ENCODE measurements at regions of chr1 and their contacts with region 1.

Region 1: DNA sequence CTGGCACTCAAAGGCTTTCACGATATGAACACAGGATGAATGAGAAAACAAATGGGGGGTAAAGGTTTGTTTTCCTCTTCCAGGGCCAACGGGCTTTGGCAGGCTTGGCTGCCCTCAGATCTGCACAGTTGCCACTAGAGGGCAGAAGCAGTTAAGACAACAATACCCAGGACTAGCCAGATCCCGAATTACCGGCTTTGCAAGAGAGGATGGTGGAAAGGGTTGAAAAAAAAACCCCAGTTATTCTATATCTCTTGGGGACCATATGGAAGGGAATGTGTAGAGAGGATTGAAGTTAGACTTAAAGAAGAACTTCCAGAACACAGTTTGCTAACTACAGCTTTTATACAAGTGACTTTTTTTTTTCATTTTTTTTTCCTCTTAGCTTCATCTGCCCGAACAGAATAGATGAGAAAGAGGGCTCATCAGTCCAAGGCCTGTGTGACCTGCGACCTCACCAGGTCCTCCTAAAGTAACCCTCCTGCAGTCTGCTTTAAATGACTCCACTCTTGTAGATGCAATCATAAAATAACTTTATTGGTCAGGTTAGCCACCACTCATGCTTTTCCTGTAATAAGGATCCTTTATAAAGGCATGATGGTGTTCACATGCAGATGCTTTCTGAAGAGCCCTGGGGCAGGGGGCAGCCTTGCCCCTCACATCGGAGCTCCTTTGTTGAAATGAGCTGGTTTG is 10.7 kb downstream of the FMOD start:
- DNase-seq: peak; percentile 71
- H3K4me3 Mint-ChIP-seq: no peak overlapping the region
- H3K27ac Mint-ChIP-seq: no peak overlapping the region
- H3K4me1 Mint-ChIP-seq: peaks cover 23% of the 10 kb centered on the region
- H3K27me3 Mint-ChIP-seq: peaks cover 11% of the 10 kb centered on the region

Region 2: GRCh38 chr1:203273206-203273868 is 66.9 kb before region 1 on chr1:
- CTCF ChIA-PET with region 1: interaction called, 847 read pairs
- POLR2A ChIA-PET with region 1: interaction called, 17 read pairs
- intact Hi-C with region 1: loop called (anchors 1 kb)
- DNase-seq: peak; percentile 95
- H3K4me3 Mint-ChIP-seq: peak overlapping the region; percentile 63
- H3K27ac Mint-ChIP-seq: peak overlapping the region; percentile 72
- H3K4me1 Mint-ChIP-seq: peaks cover 64% of the 10 kb centered on the region
- H3K27me3 Mint-ChIP-seq: no peaks in the 10 kb centered on the region

Region 3: GRCh38 chr1:203304919-203305808 is 35.1 kb before region 1 on chr1 and contains the start of gene BTG2:
- CTCF ChIA-PET with region 1: interaction called, 138 read pairs
- POLR2A ChIA-PET with region 1: interaction called, 5 read pairs
- intact Hi-C with region 1: loop called (anchors 2 kb)
- DNase-seq: peak; percentile 95
- H3K4me3 Mint-ChIP-seq: peak within 1 kb of the TSS; percentile 92
- H3K27ac Mint-ChIP-seq: peak within 1 kb of the TSS; percentile 98
- H3K4me1 Mint-ChIP-seq: peaks cover 51% of the 10 kb centered on the region
- H3K27me3 Mint-ChIP-seq: no peaks in the 10 kb centered on the region
- total RNA-seq, gene BTG2: 150 TPM

Region 4: DNA sequence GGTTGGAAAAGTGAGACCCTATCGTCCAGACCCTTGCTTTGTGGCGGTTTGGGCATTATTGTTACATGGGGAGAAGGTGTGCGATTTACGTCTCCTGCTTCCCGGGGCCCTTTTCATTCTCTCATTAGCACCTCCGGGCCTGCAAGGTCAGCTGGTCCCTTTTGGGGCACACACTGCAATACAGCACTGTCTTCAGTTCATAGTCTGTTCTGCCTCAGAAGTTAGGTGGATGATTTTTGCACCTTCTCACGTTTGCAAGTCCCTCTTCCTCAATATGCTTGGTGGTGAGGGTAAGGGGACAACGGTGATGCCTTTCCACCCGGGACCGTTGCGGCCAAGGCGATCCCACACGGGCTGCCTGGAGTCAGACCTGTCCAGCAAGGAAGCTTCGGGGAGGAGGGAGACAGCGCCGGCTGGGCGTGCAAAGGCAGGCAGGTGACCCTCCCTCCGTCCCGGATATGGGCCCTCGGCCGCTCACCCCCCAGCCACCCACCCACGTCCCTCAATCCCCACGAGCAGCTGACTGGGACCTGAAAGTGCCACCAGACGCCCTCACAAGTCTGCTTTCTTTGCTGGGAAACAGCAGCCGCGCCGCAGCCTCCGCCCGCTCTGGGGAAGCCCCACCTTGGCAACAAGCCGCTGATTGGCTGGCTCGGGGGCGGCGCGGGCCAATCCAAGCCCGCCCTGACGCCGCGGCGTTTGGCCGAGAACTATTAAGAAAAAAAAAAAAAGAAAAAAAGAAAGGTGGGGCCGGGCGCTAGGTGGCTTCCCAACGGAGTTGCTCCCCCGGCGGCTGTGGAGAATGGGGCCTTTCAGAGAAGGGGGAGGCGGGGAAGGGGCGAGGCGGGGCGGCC is 13.2 kb before region 1 on chr1:
- CTCF ChIA-PET with region 1: interaction called, 150 read pairs
- POLR2A ChIA-PET with region 1: interaction called, 4 read pairs
- intact Hi-C with region 1: no loop called
- DNase-seq: peak; percentile 96
- H3K4me3 Mint-ChIP-seq: peak overlapping the region; percentile 75
- H3K27ac Mint-ChIP-seq: peak overlapping the region; percentile 94
- H3K4me1 Mint-ChIP-seq: peaks cover 55% of the 10 kb centered on the region
- H3K27me3 Mint-ChIP-seq: no peaks in the 10 kb centered on the region

Region 5: GRCh38 chr1:203475012-203475981 is 135.0 kb after region 1 on chr1 and contains the start of gene PRELP:
- CTCF ChIA-PET with region 1: interaction called, 12 read pairs
- POLR2A ChIA-PET with region 1: no interaction called
- intact Hi-C with region 1: no loop called
- DNase-seq: no peak
- H3K4me3 Mint-ChIP-seq: no peak within 1 kb of the TSS
- H3K27ac Mint-ChIP-seq: no peak within 1 kb of the TSS
- H3K4me1 Mint-ChIP-seq: no peaks in the 10 kb centered on the region
- H3K27me3 Mint-ChIP-seq: peaks cover 23% of the 10 kb centered on the region
- total RNA-seq, gene PRELP: not detected

Region 6: GRCh38 chr1:203504397-203505250 is 164.4 kb after region 1 on chr1:
- CTCF ChIA-PET with region 1: interaction called, 12 read pairs
- POLR2A ChIA-PET with region 1: no interaction called
- intact Hi-C with region 1: no loop called
- DNase-seq: peak; percentile 84
- H3K4me3 Mint-ChIP-seq: no peak overlapping the region
- H3K27ac Mint-ChIP-seq: no peak overlapping the region
- H3K4me1 Mint-ChIP-seq: no peaks in the 10 kb centered on the region
- H3K27me3 Mint-ChIP-seq: peaks cover 2% of the 10 kb centered on the region